Heart right ventricle (tissue), 16 donors: ENCODE measurements at regions of chr17 and their contacts with region 1.

Region 1: DNA sequence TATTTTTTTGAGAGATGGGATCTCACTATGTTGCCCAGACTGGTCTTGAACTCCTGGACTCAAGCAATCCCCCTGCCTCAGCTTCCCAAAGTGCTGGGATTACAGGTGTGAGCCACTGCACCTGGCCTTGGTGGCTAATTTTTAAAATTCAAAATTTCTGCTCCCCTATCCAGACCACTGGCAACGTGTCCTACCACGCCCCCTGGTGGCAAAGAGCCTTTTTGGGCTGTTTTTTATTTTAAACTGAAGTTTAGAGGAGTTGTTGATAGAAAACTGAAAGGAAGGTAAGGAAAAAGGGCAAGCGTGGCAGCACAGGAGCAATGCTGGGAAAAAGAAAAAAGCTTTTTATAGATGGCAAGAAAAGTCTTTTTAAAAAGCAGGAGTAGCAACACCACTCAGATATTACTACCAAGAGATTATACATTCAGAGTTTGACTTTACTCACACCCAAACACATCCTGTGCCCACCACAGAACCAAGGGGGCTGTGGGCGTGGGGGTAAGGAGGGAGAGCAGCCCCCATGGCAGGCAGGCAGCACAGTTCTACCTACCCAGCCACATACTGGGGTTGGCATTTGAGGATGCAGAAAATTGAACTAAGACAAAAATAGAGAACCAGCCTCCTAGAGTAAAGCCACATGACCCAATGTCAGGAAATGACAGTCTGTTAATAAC is 4.2 kb upstream of the MXRA7 start:
- DNase-seq: peak; percentile 70 to 79
- ATAC-seq: peak in 3 of 8 donors; percentile 1 to 35 (median 34)
- H3K4me3 ChIP-seq: no peak overlapping the region
- H3K27ac ChIP-seq: peak overlapping the region in 8 of 10 donors; percentile 39 to 87 (median 62)
- H3K4me1 ChIP-seq: peaks cover 20 to 65% (median 49%) of the 10 kb centered on the region in 9 donors
- H3K27me3 ChIP-seq: no peaks in the 10 kb centered on the region
- CTCF ChIP-seq: peak; percentile 68 to 89 (median 87)

Region 2: DNA sequence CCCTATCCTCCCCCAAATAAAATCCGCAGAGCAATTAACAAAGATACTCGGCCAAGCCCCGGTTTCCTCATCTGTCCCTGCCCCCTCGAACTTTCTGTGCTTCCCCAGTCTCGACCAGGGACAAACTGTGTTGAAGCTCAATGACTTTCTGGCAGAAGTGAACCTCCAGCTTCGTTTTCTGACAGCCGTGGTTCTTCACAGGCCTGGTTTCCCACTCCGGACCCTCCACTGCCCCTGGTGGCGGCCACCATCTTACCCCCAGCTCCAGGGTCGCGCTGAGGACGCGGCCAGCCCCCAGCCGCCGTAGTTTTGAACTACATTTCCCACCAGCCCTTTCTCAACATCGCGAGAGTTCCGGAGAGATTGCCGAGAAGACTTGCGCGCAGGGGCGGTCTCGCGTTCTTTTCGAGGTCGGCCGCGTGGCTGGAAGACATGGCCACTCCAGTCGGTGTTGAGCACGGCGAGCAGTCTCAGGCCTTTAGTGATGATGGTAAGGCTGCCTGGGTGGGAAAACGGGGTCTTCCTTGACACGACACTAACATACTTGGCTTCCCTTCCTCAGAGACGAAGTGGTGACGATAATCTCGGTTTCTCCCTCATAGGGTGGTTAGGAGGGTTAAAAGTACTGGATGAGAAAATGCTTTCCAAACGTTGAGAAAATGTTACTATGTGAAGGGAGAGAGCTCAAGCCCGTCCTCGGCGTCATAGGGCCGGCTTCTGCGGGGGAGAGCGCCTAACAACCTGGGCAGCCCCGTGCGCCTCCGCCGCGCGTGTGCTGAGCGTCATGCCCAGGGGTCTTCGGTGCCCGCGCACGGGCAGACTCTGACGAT is 157.4 kb before region 1 on chr17:
- intact Hi-C with region 1: loop called in 8 of 10 experiments (anchors 2 to 10 kb)
- DNase-seq: peak; percentile 91 to 96
- ATAC-seq: peak; percentile 90 to 95 (median 93)
- H3K4me3 ChIP-seq: peak overlapping the region; percentile 49 to 88 (median 76)
- H3K27ac ChIP-seq: peak overlapping the region; percentile 70 to 94 (median 83)
- H3K4me1 ChIP-seq: peaks cover 0 to 67% (median 63%) of the 10 kb centered on the region in 9 donors
- H3K27me3 ChIP-seq: no peaks in the 10 kb centered on the region
- CTCF ChIP-seq: peak; percentile 32 to 69 (median 59)

Region 3: GRCh38 chr17:76671123-76671911 is 43.6 kb before region 1 on chr17:
- intact Hi-C with region 1: loop called in 4 of 10 experiments (anchors 5 to 10 kb)
- DNase-seq: peak; percentile 99 to 100
- ATAC-seq: peak; percentile 96 to 99 (median 98)
- H3K4me3 ChIP-seq: peak overlapping the region; percentile 29 to 92 (median 64)
- H3K27ac ChIP-seq: peak overlapping the region; percentile 70 to 95 (median 89)
- H3K4me1 ChIP-seq: peaks cover 3 to 26% (median 21%) of the 10 kb centered on the region in 9 donors
- H3K27me3 ChIP-seq: no peaks in the 10 kb centered on the region
- CTCF ChIP-seq: no peak

Region 4: GRCh38 chr17:76681222-76682137 is 33.5 kb before region 1 on chr17:
- intact Hi-C with region 1: loop called in 6 of 10 experiments (anchors 2 to 10 kb)
- DNase-seq: peak; percentile 68 to 73
- ATAC-seq: peak; percentile 30 to 76 (median 62)
- H3K4me3 ChIP-seq: peak overlapping the region in 3 of 10 donors; percentile 6 to 14 (median 7)
- H3K27ac ChIP-seq: peak overlapping the region; percentile 49 to 99 (median 90)
- H3K4me1 ChIP-seq: peaks cover 32 to 62% (median 52%) of the 10 kb centered on the region in 9 donors
- H3K27me3 ChIP-seq: no peaks in the 10 kb centered on the region
- CTCF ChIP-seq: peak; percentile 50 to 80 (median 73)

Region 5: GRCh38 chr17:76687308-76688164 is 27.4 kb before region 1 on chr17:
- intact Hi-C with region 1: loop called in 3 of 10 experiments (anchors 2 to 5 kb)
- DNase-seq: peak; percentile 62 to 69
- ATAC-seq: peak; percentile 34 to 53 (median 48)
- H3K4me3 ChIP-seq: peak overlapping the region in 1 of 10 donors; percentile 13
- H3K27ac ChIP-seq: peak overlapping the region; percentile 87 to 99 (median 94)
- H3K4me1 ChIP-seq: peaks cover 56 to 100% (median 97%) of the 10 kb centered on the region in 9 donors
- H3K27me3 ChIP-seq: no peaks in the 10 kb centered on the region
- CTCF ChIP-seq: no peak